ENCODE measurements at regions of chr1 and their contacts with region 1.

Region 1: GRCh38 chr1:171781176-171781875 is at the start of gene METTL13:
- DNase-seq: peak; percentile 99
- H3K4me3 Mint-ChIP-seq: peak within 1 kb of the TSS; percentile 93
- H3K27ac Mint-ChIP-seq: peak within 1 kb of the TSS; percentile 88
- H3K4me1 Mint-ChIP-seq: peaks cover 57% of the 10 kb centered on the region
- H3K27me3 Mint-ChIP-seq: no peaks in the 10 kb centered on the region
- total RNA-seq, gene METTL13: 55.6 and 56.5 TPM in 2 replicates

Region 2: GRCh38 chr1:171644805-171645483 is 136.4 kb before region 1 on chr1:
- intact Hi-C with region 1: loop called (anchors 1 kb)
- DNase-seq: peak; percentile 63
- H3K4me3 Mint-ChIP-seq: no peak overlapping the region
- H3K27ac Mint-ChIP-seq: no peak overlapping the region
- H3K4me1 Mint-ChIP-seq: peaks cover 10% of the 10 kb centered on the region
- H3K27me3 Mint-ChIP-seq: peaks cover 7% of the 10 kb centered on the region

Region 3: GRCh38 chr1:171707583-171707982 is 73.7 kb before region 1 on chr1:
- intact Hi-C with region 1: no loop called
- DNase-seq: no peak
- H3K4me3 Mint-ChIP-seq: no peak overlapping the region
- H3K27ac Mint-ChIP-seq: no peak overlapping the region
- H3K4me1 Mint-ChIP-seq: peaks cover 4% of the 10 kb centered on the region
- H3K27me3 Mint-ChIP-seq: no peaks in the 10 kb centered on the region

Region 4: DNA sequence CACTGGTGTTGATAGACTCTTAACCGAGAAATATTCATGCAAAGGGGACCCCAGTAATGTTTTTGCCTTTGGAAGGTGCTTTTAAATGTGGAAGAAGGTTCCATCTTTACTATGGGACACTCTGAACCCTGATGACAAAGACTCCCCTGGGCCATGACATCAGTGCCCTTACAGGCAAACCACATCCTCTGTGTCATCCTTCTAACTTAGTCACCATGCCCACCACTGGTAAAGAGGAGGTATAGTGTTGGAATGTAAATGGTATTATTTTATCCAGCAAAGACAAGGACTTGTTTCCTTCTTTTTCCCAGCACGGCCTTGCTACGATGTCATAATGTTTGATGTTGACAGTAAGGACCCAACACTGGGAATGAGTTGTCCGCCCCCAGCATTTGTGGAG is 12.8 kb after region 1 on chr1:
- intact Hi-C with region 1: loop called (anchors 1 kb)
- DNase-seq: peak; percentile 44
- H3K4me3 Mint-ChIP-seq: peak overlapping the region; percentile 66
- H3K27ac Mint-ChIP-seq: peak overlapping the region; percentile 93
- H3K4me1 Mint-ChIP-seq: peaks cover 47% of the 10 kb centered on the region
- H3K27me3 Mint-ChIP-seq: no peaks in the 10 kb centered on the region

Region 5: DNA sequence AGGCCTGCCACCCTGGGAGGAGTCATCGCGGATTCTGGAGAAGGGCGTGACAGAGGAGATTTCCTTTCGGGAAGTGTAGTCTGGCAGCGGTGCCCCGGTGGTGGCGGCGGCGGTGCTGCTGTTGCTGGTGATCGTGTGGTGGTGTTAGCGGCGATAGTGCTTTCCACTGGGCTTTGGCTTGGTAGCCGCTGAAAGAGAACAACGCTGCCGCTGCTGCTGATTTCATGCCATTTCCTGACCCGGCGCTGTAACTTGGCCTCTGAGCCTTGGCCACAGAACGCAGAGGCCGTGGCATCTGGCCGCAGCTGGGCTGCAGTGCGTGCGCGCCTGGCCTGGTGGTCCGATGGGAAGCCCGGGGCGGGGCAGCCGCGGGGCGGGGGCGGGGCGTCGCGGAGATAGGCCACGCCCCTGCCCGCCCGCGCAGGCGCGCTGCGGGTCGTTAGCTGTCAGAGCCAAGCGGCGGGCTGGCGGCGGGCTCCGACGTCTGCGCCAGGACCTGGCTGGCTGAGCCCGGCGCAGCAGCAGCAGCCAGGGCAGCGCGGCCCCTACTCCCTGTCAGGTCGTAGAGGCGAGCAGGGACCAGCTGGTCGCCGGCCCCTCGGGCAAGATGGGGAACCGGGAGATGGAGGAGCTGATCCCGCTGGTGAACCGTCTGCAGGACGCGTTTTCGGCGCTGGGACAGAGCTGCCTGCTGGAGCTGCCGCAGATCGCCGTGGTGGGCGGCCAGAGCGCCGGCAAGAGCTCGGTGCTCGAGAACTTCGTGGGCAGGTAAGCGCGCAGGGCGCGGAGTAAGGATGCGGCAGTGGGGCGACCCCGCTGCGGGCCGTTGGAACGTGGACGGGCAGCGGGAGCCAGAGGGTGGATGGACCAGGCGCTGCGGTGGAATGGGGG is 60.0 kb after region 1 on chr1 and contains the start of gene DNM3:
- intact Hi-C with region 1: loop called (anchors 1 kb)
- DNase-seq: peak; percentile 81
- H3K4me3 Mint-ChIP-seq: peak within 1 kb of the TSS; percentile 87
- H3K27ac Mint-ChIP-seq: peak within 1 kb of the TSS; percentile 72
- H3K4me1 Mint-ChIP-seq: peaks cover 18% of the 10 kb centered on the region
- H3K27me3 Mint-ChIP-seq: peaks cover 37% of the 10 kb centered on the region
- total RNA-seq, gene DNM3: 0.62 and 0.64 TPM in 2 replicates

Region 6: DNA sequence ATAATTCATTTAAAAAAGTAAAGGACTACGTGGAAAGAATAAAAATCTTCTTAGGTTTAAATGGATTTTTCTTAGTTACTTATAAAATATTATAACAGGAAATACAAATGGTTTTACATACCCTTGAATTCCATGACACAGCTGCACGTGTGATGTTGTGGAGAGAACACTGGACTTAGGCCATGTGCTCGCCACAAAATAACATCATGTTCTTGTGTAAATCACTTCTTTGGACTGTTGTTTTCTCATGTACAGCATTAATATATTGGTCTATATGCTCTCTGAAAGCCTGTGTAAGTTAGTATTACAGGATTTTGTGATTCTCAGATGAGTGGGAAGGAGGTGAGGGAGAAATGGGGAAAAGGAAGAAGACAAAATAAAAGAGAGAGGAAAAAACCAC is 288.2 kb after region 1 on chr1:
- intact Hi-C with region 1: no loop called
- DNase-seq: no peak
- H3K4me3 Mint-ChIP-seq: no peak overlapping the region
- H3K27ac Mint-ChIP-seq: no peak overlapping the region
- H3K4me1 Mint-ChIP-seq: no peaks in the 10 kb centered on the region
- H3K27me3 Mint-ChIP-seq: no peaks in the 10 kb centered on the region

Measured in activated T-helper 1 cell treated with anti-CD3 and anti-CD28 coated beads, Interleukin-12 subunit alpha, Interleukin-12 subunit beta, Interleukin-2, Interleukin-4 antibody, amounts not matched to agents 30 ng/mL and 10 ng/mL and 1 ng/mL, durations not matched to agents 14 hours and 24 hours and 36 hours (primary cell).